ENCODE measurements at regions of chr2 and their contacts with region 1.

Region 1: DNA sequence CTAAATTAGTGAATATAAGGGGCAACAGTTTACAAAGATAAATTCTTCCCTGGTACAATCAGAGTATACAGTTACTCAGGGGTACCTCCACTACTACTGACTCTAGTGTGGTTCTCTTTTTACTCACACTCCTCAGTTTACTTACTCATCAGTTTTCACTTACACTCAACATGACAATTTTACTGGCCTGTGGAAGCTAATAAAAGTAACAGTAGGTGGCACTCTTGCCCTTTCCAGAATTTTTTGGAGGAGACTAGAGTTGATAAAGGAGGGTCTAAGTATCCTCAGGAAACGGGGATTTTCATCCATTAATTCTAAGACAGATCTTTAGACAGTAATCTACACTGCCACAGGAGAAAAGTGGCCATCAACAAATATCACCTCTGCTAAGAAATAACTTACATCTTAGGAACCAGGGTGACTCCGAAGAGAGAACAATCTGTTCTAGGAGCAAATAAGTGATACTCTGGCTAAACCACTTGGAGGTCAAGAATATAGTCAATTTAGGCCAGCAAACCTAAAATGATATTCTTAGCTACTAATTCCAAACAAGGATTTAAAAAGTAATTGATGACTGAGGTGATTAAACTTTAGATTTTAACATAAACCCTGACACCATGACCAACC is 61.3 kb downstream of the ATL2 start:
- H3K4me3 Mint-ChIP-seq: no peak overlapping the region
- H3K27ac Mint-ChIP-seq: no peak overlapping the region
- H3K4me1 Mint-ChIP-seq: peaks cover 4% of the 10 kb centered on the region
- H3K27me3 Mint-ChIP-seq: no peaks in the 10 kb centered on the region

Region 2: DNA sequence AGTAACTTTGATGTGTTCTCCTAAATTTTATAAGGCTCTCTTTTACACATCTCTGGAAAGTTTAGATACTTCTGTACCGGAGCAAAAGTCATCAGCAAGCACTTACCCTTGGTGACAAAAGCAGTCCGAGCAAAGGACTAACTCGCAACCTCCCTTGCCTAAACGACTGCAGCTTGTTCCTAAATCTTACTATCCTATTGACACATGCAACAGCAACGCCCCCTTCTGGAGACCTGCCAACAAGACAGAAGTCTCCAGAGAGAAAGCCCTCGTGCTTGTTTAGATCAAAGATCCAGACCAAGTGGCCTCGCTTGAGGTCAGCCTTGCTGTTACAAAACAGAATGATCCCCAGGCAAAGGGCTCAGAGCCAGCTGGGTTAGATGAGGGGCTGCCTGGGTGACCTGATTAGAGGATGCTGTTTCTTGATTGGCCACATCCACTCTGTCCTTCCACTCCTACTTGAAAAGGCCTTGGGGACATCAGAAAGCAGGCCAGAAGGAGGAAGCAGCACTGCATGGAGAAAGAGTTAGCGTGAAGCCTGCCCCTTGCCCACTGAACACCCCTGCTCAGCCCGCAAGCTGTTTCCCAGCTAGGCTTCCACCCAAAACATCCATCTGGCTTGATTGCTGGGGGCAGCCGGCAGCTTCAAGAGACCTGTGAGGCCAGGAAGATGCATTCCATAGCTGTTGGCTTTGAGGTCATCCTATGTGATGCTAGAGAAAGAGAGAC is 192.7 kb after region 1 on chr2:
- intact Hi-C with region 1: loop called (anchors 1 kb)
- H3K4me3 Mint-ChIP-seq: no peak overlapping the region
- H3K27ac Mint-ChIP-seq: peak overlapping the region; percentile 32
- H3K4me1 Mint-ChIP-seq: peaks cover 22% of the 10 kb centered on the region
- H3K27me3 Mint-ChIP-seq: peaks cover under 1% of the 10 kb centered on the region

Region 3: DNA sequence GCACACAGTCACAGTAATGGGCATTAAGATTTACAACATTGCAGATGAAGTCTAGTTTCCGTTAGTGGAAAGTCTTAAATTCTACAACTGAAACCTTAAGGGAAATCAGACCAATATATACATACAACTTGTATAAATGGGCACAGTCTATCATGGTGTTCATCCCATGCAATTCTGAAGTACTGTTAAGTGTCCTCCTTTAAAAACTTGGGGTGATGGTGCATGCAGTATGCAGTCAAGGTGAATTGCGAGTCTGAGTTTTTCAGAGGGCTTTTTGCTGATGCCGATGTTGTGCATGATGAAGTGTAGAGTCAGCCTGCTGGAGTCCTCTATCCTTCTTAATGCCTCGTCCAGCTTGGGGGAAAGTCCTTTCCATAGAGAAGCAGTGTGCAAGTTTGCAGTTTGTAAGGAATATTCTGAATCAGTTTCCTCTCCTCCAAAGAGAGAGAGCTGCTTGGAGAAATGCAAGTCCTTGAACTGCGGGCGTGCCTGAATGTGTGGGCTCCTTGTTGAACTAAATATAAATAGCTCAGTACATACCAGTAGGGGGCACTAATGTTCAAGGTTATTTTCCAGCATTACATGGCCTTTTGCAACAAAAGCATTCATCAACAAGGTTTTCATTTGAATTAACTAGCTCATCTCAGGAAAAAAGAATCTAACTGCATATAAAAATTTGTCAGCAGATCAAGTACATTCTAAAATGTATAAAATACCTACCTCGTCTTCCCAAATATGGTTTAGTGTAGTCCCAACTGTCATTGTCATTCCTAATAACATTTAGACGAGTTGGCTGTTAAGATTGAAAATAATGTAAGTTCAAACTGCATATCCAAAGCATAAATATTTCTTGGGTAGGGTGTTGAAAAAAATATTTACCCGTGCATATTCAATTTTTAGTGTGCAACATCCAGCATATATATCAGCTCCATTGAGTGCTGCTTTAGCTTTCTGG is 265.6 kb after region 1 on chr2:
- intact Hi-C with region 1: loop called (anchors 5 kb)
- H3K4me3 Mint-ChIP-seq: no peak overlapping the region
- H3K27ac Mint-ChIP-seq: no peak overlapping the region
- H3K4me1 Mint-ChIP-seq: peaks cover 4% of the 10 kb centered on the region
- H3K27me3 Mint-ChIP-seq: no peaks in the 10 kb centered on the region

Region 4: GRCh38 chr2:38728694-38729093 is 412.9 kb after region 1 on chr2:
- intact Hi-C with region 1: loop called (anchors 5 kb)
- H3K4me3 Mint-ChIP-seq: no peak overlapping the region
- H3K27ac Mint-ChIP-seq: no peak overlapping the region
- H3K4me1 Mint-ChIP-seq: peaks cover 16% of the 10 kb centered on the region
- H3K27me3 Mint-ChIP-seq: no peaks in the 10 kb centered on the region

Region 5: DNA sequence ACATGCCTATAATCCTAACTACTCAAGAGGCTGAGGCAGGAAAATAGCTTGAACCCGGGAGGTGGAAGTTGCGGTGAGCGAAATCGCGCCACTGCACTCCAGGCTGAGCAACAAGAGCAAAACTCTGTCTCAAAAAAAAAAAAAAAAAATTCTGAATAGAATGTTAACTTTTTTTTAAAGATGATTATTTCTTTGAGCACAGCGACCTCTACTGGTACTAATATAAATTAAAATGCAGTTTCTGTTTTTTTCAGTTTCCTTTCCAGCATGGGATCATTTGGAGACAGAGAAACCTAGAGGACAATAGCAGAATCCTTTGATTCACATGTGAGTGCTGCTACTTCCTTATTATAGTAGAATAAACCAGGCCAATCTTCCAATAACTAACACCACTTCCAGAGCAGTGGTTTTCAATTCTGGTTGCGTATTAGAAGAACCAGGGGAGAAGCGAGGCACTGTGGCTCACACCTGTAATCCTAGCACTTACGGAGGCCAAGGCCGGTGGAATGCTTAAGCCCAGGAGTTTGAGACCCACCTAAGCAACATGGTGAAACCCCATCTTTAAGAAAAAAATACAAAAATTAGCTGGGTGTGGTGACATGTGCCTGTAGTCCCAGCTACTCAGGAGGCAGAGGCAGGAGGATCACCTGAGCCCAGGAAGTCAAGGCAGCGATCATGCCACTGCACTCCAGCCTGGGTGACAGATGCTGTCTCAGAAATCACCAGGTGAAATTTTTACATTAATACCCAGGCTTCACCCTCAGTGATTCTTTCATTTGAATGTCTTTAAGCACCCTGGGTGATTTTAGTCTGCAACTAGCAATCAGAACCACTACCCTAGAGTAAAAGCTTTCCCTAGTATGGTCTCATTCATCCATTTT is 425.3 kb after region 1 on chr2:
- intact Hi-C with region 1: loop called (anchors 5 kb)
- H3K4me3 Mint-ChIP-seq: no peak overlapping the region
- H3K27ac Mint-ChIP-seq: no peak overlapping the region
- H3K4me1 Mint-ChIP-seq: peaks cover 41% of the 10 kb centered on the region
- H3K27me3 Mint-ChIP-seq: no peaks in the 10 kb centered on the region

Measured in dendritic cell treated with granulocyte-macrophage colony-stimulating factor and Interleukin-4, amounts not matched to agents 40 ng/mL and 50 ng/mL, for 4 days (primary cell).